Activated CD4-positive, alpha-beta memory T cell treated with anti-CD3 and anti-CD28 coated beads for 36 hours (primary cell): ENCODE measurements at regions of chr10 and their contacts with region 1.

Region 1: GRCh38 chr10:23391821-23392220 is 47.1 kb upstream of the OTUD1 start:
- DNase-seq: peak; percentile 50
- H3K4me3 Mint-ChIP-seq: no peak overlapping the region
- H3K27ac Mint-ChIP-seq: no peak overlapping the region
- H3K4me1 Mint-ChIP-seq: peaks cover 10% of the 10 kb centered on the region
- H3K27me3 Mint-ChIP-seq: no peaks in the 10 kb centered on the region

Region 2: DNA sequence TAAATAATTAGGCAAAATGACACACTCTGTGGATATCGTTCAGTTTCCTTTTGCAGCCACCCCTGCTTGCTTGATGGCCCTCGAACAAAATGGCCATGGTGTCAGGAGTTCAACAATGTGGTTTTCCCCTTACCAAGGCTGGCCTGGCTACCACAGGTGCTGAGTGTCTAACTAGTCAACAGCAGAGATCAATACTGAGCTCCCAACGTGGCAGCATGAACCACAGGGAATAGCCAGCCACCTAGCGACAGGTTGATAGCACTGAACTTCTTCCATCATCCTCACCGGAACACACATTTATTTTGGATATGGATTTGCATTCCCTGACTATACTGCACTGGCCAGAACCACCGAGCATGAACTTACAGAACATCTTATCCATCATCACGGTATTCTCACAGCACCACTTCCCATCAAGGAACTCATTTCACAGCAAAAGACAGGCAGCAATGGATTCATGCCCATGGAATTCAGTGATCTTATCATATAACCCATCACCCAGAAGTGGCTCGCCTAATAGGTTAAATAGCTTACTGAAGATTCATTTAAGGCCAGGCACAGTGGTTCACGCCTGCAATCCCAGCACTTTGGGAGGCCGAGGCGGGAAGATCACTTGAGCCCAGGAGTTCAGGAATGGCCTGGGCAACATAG is 53.5 kb before region 1 on chr10:
- CTCF ChIA-PET with region 1: no interaction called
- POLR2A ChIA-PET with region 1: no interaction called
- intact Hi-C with region 1: loop called (anchors 2 kb)
- DNase-seq: no peak
- H3K4me3 Mint-ChIP-seq: no peak overlapping the region
- H3K27ac Mint-ChIP-seq: no peak overlapping the region
- H3K4me1 Mint-ChIP-seq: peaks cover 73% of the 10 kb centered on the region
- H3K27me3 Mint-ChIP-seq: no peaks in the 10 kb centered on the region

Region 3: DNA sequence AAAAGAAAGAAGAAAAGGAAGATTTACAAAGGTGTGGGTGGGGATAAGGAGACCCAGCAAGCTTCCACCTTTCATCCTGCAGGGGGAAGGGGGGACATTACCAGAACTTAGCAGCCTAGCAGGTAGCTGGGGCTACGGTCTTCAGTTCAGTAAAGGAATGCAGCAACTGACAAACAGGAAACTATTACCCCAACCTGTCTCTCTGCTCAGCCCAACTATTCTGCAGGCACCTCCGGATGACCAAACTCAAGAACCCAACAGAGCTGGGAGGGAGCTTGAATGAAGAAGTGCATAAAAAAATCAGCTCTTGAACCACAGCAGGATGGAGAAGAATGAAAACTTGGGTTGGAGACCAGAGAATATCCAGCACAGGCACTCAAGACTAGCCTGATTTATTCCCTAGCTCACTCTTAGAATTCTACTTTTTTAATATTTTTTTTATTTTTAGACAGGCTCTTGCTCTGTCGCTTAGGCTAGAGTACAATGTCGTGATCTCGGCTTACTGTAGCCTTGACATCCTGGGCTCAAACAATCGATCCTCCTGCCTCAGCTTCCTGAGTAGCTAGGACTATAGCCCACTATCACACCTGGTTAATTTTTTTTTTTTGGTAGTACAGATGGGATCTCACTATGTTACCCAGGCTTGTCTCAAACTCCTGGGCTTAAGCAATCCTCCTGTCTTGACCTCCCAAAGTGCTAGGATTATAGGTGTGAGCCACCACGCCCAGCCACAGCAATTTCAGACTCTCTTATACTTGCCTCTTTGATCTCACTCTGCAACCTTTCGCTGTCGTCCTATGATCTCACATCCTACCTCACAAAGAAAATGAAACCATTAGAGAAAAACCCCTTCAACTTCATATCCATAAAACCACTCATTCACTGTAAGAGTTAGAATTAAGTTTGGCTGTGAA is 28.7 kb before region 1 on chr10:
- CTCF ChIA-PET with region 1: interaction called, 3 read pairs
- POLR2A ChIA-PET with region 1: interaction called, 4 read pairs
- intact Hi-C with region 1: loop called (anchors 1 kb)
- DNase-seq: peak; percentile 68
- H3K4me3 Mint-ChIP-seq: peak overlapping the region; percentile 63
- H3K27ac Mint-ChIP-seq: peak overlapping the region; percentile 89
- H3K4me1 Mint-ChIP-seq: peaks cover 61% of the 10 kb centered on the region
- H3K27me3 Mint-ChIP-seq: peaks cover 3% of the 10 kb centered on the region

Region 4: DNA sequence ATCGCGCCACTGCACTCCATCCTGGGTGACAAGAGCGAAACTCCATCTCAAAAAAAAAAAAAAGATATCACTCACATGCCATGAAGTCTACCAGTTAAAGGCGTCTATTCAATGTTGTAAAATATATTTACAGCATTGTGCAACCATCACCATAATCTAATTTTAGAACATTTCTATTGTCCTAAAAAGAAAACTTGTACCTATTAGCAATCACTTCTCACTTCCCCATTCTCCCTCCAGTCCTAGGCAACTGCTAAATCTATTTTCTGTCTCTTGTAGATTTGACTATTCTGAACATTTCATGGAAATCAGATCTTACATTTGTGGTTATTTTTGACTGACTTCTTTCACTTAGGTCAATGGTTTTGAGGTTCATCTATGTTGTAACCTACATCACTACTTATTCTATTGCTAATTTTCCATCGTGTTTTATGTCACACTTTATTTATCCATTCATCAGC is 21.8 kb after region 1 on chr10:
- CTCF ChIA-PET with region 1: no interaction called
- POLR2A ChIA-PET with region 1: no interaction called
- intact Hi-C with region 1: loop called (anchors 2 kb)
- DNase-seq: no peak
- H3K4me3 Mint-ChIP-seq: no peak overlapping the region
- H3K27ac Mint-ChIP-seq: no peak overlapping the region
- H3K4me1 Mint-ChIP-seq: peaks cover 24% of the 10 kb centered on the region
- H3K27me3 Mint-ChIP-seq: no peaks in the 10 kb centered on the region

Region 5: DNA sequence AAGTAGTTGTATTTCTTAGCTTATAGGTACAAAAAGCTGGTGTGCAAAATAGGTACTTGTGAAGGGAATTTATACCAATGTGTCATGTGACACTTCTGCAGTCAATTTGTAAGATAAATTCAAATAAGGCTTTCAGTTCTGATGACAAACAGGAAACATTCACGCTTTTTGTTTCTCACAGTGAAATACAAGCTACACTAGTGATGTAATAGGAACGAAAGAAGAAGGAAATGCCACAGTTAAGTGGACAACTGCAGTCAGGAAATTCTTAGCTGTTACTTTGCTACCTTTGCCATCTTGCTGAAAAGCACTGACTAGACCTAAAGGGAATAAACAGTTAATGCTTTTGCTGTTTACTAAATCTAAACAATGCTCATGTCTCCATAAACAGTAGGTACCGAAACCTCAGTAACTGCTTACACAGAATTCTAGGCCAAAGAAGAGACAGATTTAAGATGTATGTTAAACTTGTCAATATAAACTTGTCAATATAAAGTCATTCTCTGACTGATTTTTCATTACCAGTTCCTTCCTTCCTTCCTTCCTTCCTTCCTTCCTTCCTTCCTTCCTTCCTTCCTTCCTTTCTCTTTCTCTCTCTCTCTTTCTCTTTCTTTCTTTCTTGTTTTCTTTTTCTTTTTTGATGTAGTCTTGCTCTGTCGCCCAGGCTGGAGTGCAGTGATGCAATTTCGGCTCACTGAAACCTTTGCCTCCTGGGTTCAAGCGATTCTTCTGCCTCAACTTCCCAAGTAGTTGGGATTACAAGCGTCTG is 57.2 kb after region 1 on chr10:
- CTCF ChIA-PET with region 1: no interaction called
- POLR2A ChIA-PET with region 1: no interaction called
- intact Hi-C with region 1: loop called (anchors 5 kb)
- DNase-seq: no peak
- H3K4me3 Mint-ChIP-seq: no peak overlapping the region
- H3K27ac Mint-ChIP-seq: peak overlapping the region; percentile 82
- H3K4me1 Mint-ChIP-seq: peaks cover 34% of the 10 kb centered on the region
- H3K27me3 Mint-ChIP-seq: no peaks in the 10 kb centered on the region

Region 6: GRCh38 chr10:23540401-23541030 is 148.7 kb after region 1 on chr10:
- CTCF ChIA-PET with region 1: no interaction called
- POLR2A ChIA-PET with region 1: no interaction called
- intact Hi-C with region 1: no loop called
- DNase-seq: no peak
- H3K4me3 Mint-ChIP-seq: no peak overlapping the region
- H3K27ac Mint-ChIP-seq: no peak overlapping the region
- H3K4me1 Mint-ChIP-seq: peaks cover 18% of the 10 kb centered on the region
- H3K27me3 Mint-ChIP-seq: peaks cover 6% of the 10 kb centered on the region